Activated T-helper 1 cell treated with anti-CD3 and anti-CD28 coated beads, Interleukin-12 subunit alpha, Interleukin-12 subunit beta, Interleukin-2, Interleukin-4 antibody, amounts not matched to agents 30 ng/mL and 10 ng/mL and 1 ng/mL, durations not matched to agents 14 hours and 24 hours and 36 hours (primary cell): ENCODE measurements at regions of chr2 and their contacts with region 1.

Region 1: DNA sequence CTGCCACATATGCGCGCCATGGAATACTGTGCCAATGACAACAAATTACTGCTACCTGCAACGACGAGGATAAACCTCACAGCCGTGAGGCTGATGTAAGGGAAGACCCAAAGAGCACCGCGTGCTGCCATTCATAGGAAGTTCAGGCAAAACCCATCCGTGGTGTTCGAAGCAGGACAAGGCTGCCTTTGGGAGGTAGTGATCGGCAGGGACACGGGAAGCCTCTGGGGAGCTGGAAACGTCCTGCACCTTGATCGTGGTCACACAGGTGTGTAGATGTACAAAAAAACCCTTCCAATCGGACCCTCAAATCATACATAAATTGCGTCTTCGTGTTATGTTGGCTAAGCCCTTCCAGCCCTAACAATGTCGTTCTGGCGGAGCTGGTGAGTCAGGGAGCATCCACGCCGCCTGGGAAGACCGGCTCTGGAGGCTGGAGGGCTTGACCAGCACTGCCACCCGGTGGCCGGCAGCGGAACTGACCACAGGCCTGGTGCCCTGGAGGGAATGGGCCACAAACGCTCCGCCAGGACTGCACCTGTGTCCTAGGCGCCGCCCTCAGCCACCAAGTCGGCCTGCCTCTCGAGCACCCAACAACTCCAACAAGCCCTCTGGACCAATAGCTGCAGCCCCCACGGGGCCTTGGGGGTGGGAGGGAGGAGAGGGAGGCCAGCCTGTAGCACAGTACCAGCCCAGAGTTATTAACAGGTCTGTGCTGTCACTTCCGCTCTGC is 4.1 kb upstream of the NEURL3 start:
- DNase-seq: peak; percentile 46
- H3K4me3 Mint-ChIP-seq: peak overlapping the region; percentile 26
- H3K27ac Mint-ChIP-seq: no peak overlapping the region
- H3K4me1 Mint-ChIP-seq: peaks cover 57% of the 10 kb centered on the region
- H3K27me3 Mint-ChIP-seq: peaks cover 3% of the 10 kb centered on the region

Region 2: GRCh38 chr2:96359310-96359709 is 150.0 kb before region 1 on chr2:
- intact Hi-C with region 1: loop called (anchors 1 kb)
- DNase-seq: no peak
- H3K4me3 Mint-ChIP-seq: no peak overlapping the region
- H3K27ac Mint-ChIP-seq: no peak overlapping the region
- H3K4me1 Mint-ChIP-seq: no peaks in the 10 kb centered on the region
- H3K27me3 Mint-ChIP-seq: no peaks in the 10 kb centered on the region

Region 3: GRCh38 chr2:96470636-96471035 is 38.6 kb before region 1 on chr2:
- intact Hi-C with region 1: loop called (anchors 1 kb)
- DNase-seq: peak; percentile 28
- H3K4me3 Mint-ChIP-seq: peak overlapping the region; percentile 2
- H3K27ac Mint-ChIP-seq: no peak overlapping the region
- H3K4me1 Mint-ChIP-seq: peaks cover 16% of the 10 kb centered on the region
- H3K27me3 Mint-ChIP-seq: peaks cover 4% of the 10 kb centered on the region

Region 4: GRCh38 chr2:96493072-96493471 is 16.2 kb before region 1 on chr2:
- intact Hi-C with region 1: no loop called
- DNase-seq: no peak
- H3K4me3 Mint-ChIP-seq: no peak overlapping the region
- H3K27ac Mint-ChIP-seq: no peak overlapping the region
- H3K4me1 Mint-ChIP-seq: peaks cover 63% of the 10 kb centered on the region
- H3K27me3 Mint-ChIP-seq: no peaks in the 10 kb centered on the region

Region 5: DNA sequence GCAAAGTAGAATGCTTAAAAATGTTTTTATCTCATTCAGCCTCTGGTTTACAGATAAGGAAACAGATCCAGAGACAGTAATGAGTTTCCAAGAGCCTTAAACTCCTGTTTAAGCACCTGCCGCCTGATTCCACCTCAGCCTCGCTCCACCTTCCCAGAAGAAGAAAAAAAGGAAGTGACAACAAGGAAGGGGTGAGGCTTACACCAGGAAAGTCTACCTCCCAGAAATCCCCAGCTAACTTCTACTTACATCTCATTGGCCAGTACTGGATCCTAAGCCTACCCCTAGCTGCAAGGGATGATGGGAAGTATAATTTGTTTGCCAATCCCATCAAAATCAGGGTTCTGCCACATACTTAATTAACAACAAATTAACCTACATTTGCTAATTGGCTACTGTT is 11.9 kb after region 1 on chr2:
- intact Hi-C with region 1: loop called (anchors 1 kb)
- DNase-seq: no peak
- H3K4me3 Mint-ChIP-seq: no peak overlapping the region
- H3K27ac Mint-ChIP-seq: peak overlapping the region; percentile 40
- H3K4me1 Mint-ChIP-seq: peaks cover 57% of the 10 kb centered on the region
- H3K27me3 Mint-ChIP-seq: no peaks in the 10 kb centered on the region

Region 6: GRCh38 chr2:96554293-96555145 is 45.2 kb after region 1 on chr2:
- intact Hi-C with region 1: loop called (anchors 5 kb)
- DNase-seq: peak; percentile 56
- H3K4me3 Mint-ChIP-seq: no peak overlapping the region
- H3K27ac Mint-ChIP-seq: peak overlapping the region; percentile 34
- H3K4me1 Mint-ChIP-seq: peaks cover 23% of the 10 kb centered on the region
- H3K27me3 Mint-ChIP-seq: no peaks in the 10 kb centered on the region